Heart right ventricle (tissue), 16 donors: ENCODE measurements at regions of chr4 and their contacts with region 1.

Region 1: DNA sequence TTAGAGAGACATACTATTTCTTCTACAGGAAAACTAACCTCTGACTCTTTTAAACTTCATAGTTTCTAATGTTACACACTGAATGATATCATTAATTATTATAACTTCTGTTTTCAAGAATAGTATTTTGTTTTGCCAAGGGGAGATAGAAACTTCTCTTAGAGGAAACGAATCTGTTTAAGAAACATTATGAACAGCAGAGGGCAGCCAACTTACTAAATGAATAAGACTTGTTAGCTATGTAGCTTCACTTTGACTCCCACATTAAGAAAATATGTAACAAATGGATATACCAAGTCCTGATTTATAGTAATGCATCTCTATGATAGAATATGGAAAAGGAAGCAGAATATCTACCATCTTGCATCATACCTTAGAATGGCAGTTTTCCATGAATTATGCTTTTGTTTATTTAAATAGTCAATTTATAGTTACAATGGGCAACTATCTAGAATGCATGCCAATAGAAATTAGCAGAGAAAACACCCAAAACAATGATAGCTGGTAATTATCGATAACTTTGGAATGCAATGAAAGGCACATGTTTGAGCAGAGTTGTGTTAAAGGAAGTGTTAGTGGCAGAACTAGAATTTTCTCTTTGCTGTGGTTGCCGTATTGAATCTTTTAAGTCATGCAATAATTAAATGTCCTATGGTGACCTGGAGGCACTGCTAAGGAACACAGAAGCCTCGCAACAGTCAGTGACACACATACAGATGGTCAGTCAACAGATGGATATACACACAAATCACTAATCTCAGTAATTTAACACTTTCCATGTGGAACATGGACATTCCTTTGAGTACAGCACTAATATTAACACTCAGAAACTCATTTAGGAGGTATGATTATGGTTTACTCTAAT is 105.7 kb upstream of the PDLIM3 start:
- DNase-seq: no peak
- ATAC-seq: no peak
- H3K4me3 ChIP-seq: no peak overlapping the region
- H3K27ac ChIP-seq: no peak overlapping the region
- H3K4me1 ChIP-seq: peaks cover 0 to 40% (median 0%) of the 10 kb centered on the region in 9 donors
- H3K27me3 ChIP-seq: peaks cover 0 to 37% (median 0%) of the 10 kb centered on the region in 7 donors
- CTCF ChIP-seq: peak; percentile 10 to 71 (median 55)

Region 2: GRCh38 chr4:185774845-185775680 is 134.0 kb after region 1 on chr4:
- intact Hi-C with region 1: loop called in 2 of 10 experiments (anchors 10 kb)
- DNase-seq: peak in 1 of 2 donors; percentile 48
- ATAC-seq: peak in 5 of 8 donors; percentile 27 to 60 (median 41)
- H3K4me3 ChIP-seq: peak overlapping the region; percentile 1 to 50 (median 44)
- H3K27ac ChIP-seq: peak overlapping the region; percentile 65 to 93 (median 80)
- H3K4me1 ChIP-seq: peaks cover 0 to 89% (median 44%) of the 10 kb centered on the region in 9 donors
- H3K27me3 ChIP-seq: no peaks in the 10 kb centered on the region
- CTCF ChIP-seq: peak in 1 of 9 donors; percentile 14

Region 3: GRCh38 chr4:185792384-185793115 is 151.5 kb after region 1 on chr4:
- intact Hi-C with region 1: loop called in 1 of 10 experiments (anchors 10 kb)
- DNase-seq: peak in 1 of 2 donors; percentile 29
- ATAC-seq: peak in 3 of 8 donors; percentile 12 to 23 (median 20)
- H3K4me3 ChIP-seq: no peak overlapping the region
- H3K27ac ChIP-seq: peak overlapping the region in 8 of 10 donors; percentile 8 to 62 (median 24)
- H3K4me1 ChIP-seq: peaks cover 9 to 91% (median 60%) of the 10 kb centered on the region in 9 donors
- H3K27me3 ChIP-seq: no peaks in the 10 kb centered on the region
- CTCF ChIP-seq: no peak

Region 4: DNA sequence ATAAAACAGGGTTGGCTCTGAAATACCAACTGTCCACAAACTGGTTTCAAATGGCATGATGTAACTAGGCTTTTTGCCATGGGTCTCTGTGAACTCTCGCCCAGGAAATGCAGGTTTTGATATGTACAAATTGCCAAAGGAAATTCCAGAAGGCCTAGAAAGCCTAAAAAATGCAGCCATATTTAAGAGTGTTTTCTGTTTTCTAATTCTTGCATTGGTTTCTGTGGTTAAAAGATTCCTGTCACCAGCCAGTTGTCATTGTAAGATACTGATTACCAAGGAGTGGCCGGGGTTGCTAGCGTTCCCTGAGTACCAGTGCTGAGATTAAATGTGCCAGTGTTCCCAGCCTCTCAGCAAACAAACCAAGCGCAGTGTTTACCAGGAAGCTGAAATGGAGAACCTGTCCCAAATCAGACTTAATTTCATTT is 224.9 kb after region 1 on chr4:
- intact Hi-C with region 1: loop called in 1 of 10 experiments (anchors 10 kb)
- DNase-seq: no peak
- ATAC-seq: peak in 6 of 8 donors; percentile 50 to 85 (median 74)
- H3K4me3 ChIP-seq: no peak overlapping the region
- H3K27ac ChIP-seq: peak overlapping the region; percentile 53 to 89 (median 83)
- H3K4me1 ChIP-seq: peaks cover 0 to 67% (median 17%) of the 10 kb centered on the region in 9 donors
- H3K27me3 ChIP-seq: no peaks in the 10 kb centered on the region
- CTCF ChIP-seq: no peak

Region 5: DNA sequence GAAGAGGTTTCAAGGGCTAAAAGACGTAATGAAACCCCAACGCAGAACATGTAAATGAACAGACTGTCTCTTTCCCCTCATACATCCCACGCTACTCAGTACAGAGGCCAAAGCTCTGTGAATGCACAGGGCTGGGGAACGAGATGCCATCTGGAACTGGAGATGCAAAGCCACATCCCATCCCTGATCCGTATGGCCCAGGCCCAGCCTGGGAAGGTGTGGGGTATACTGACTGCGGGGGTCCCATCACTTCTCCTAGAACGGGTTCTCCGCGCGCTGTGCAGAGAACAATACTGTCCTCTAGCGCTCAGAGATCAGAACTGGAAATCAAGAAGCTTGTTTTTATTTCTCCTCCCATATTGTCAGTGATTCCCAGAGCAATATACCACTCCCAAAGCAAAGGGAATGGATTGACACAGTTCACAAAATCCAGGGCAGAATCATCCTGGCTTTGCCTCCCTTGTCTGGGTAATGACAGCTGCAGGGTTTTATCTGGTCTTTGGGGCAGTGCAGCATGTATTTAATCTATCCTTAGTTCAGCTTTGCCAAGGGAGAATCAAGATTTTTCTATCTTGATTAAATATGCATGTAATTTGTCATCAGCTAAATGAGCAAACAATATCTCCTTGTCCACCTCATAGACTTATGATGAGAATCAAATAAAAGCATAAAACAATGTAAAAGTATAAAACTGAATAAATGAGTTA is 380.6 kb after region 1 on chr4:
- intact Hi-C with region 1: loop called in 8 of 10 experiments (anchors 2 to 5 kb)
- DNase-seq: peak; percentile 25 to 36
- ATAC-seq: peak; percentile 62 to 86 (median 72)
- H3K4me3 ChIP-seq: peak overlapping the region in 8 of 10 donors; percentile 5 to 47 (median 32)
- H3K27ac ChIP-seq: peak overlapping the region in 5 of 10 donors; percentile 6 to 68 (median 35)
- H3K4me1 ChIP-seq: peaks cover 0 to 20% (median 7%) of the 10 kb centered on the region in 9 donors
- H3K27me3 ChIP-seq: no peaks in the 10 kb centered on the region
- CTCF ChIP-seq: peak; percentile 60 to 92 (median 85)

Region 6: GRCh38 chr4:186037692-186038658 is 396.9 kb after region 1 on chr4:
- intact Hi-C with region 1: loop called in 8 of 10 experiments (anchors 5 kb)
- DNase-seq: peak in 1 of 2 donors; percentile 73
- ATAC-seq: peak; percentile 69 to 93 (median 88)
- H3K4me3 ChIP-seq: no peak overlapping the region
- H3K27ac ChIP-seq: no peak overlapping the region
- H3K4me1 ChIP-seq: peaks cover 0 to 18% (median 9%) of the 10 kb centered on the region in 9 donors
- H3K27me3 ChIP-seq: peaks cover 0 to 4% (median 0%) of the 10 kb centered on the region in 7 donors
- CTCF ChIP-seq: peak; percentile 67 to 92 (median 84)